AG04449 (cell line): ENCODE measurements at regions of chr1 and their contacts with region 1.

Region 1: DNA sequence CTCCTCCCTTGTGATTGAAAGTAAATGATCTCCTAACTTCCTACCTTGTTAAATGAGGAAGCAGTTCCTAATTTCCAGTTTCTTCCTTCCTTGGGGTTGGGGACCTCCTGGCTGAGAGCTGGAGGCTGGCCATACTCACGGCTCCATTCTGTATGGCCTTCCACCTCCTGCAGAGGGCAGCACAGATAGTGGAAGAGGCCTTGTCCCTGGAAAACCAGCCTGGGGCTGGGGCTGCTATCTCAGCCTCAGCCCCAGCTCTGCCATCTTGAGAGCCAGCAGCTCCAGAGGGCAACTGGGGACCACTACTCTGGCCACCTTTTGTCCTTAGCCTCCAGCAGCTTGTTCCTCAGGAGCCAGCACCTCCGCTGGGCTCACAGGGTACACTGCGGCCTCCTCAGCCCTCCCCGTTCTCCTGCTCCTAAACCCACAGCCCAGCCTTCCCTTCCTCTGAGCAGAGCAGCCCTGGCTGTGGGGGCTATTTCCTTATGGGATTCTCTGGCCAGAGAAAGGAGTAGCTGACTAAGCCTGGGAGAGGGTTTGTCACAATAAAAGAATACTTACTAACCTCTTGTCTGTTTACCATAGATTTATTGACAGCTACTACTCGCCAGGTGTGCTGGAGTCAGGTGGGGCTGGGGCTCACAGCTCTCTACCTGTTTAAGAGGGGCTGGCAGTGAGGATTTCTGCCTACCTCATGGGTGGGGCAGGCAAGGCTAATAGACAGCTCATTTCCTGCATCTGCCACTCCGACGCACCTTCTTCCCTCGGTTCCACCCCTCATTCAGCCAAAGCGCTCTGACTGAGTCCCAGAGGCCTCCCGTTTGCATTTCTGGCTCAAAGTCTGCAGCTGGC is 6.3 kb downstream of the TMEM234 start:
- DNase-seq: no peak
- H3K4me3 ChIP-seq: no peak overlapping the region
- CTCF ChIP-seq: peak; percentile 86

Region 2: GRCh38 chr1:31977385-31978131 is 238.3 kb before region 1 on chr1:
- CTCF ChIA-PET with region 1: no interaction called
- POLR2A ChIA-PET with region 1: no interaction called
- DNase-seq: peak; percentile 59
- H3K4me3 ChIP-seq: no peak overlapping the region
- CTCF ChIP-seq: peak; percentile 41

Region 3: DNA sequence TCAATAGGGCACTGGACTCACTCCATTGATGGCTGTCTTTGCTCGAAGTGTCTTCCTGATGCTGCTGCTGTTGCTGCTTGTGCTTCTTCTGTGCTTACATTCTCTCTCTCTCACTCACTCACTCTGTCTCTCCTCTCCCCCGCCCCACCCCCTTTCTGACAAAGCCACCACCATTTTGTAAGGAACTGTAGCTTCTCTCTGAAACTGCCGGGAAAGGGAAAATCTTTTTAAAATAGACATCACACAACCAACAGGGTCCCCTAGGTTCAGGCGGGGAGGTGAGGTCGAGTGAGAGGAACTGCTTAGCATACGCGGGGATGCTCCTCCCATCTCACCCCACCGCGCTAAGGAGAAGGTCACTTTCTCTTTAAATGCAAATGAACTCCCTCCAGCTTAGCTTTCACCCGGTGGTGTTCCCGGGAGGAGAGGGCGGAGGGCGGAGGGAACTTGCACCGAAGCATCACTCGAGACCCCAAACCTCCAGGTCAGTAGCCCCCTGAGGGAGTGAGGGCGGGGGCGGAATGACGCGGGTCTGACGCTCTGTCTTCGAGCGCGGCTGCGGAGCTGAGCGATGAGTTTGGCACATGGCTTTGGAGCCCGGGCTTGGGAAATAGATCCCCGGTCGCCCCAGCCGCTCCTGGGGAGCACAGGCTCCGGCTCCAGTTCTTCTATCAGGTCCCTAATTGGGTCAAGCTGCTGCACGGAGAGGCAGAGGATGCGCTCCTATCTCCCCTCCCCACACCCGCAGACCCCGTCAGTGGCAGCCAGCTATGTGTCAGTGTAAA is 15.4 kb before region 1 on chr1 and contains the start of gene CCDC28B:
- CTCF ChIA-PET with region 1: interaction called, 54 read pairs
- POLR2A ChIA-PET with region 1: interaction called, 6 read pairs
- DNase-seq: no peak
- H3K4me3 ChIP-seq: peak within 1 kb of the TSS; percentile 78
- CTCF ChIP-seq: no peak

Region 4: GRCh38 chr1:32247983-32248889 is 32.4 kb after region 1 on chr1:
- CTCF ChIA-PET with region 1: interaction called, 25 read pairs
- POLR2A ChIA-PET with region 1: no interaction called
- DNase-seq: no peak
- H3K4me3 ChIP-seq: no peak overlapping the region
- CTCF ChIP-seq: peak; percentile 92

Region 5: DNA sequence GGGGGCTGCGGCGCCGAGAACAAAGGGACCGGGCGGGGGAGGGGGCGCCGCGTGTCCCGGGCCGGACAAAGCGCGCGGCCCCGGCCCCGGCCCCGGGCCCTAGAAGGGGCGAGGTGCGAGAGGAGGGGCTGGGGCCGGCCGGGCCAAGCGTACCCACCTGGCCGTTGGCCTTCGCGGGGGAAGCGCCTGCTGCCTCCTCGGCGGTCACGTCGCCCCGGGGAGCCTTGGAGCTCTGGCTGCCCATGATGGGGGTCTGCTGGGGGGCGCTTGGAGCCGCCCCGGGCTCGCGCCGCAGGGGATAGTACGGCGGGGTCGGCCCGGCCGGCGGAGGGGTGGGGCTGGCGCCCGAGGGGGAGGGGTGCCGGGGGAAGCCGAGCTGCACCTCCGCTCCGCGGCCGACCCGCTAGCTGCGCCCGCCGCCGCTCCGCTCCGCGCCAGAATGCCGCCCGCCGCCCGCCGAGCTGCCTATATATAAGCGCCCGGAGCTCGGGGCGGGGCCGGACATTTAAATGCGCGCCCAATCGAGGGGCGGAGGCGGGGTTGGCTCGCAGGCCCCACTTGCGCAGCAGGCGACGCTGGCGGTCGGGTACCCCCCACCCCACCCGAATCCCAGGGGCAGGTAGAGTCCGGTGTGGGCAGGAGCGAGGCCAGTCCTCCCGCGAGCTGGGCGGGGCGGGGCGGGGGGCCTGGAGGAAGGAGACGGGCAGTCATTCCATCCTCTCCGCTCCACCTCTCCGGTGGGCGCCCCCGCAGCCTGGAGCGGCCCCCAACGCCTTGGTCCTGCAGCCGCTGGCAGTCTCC is 120.1 kb after region 1 on chr1 and contains the start of gene MARCKSL1:
- CTCF ChIA-PET with region 1: interaction called, 26 read pairs
- POLR2A ChIA-PET with region 1: interaction called, 22 read pairs
- DNase-seq: no peak
- H3K4me3 ChIP-seq: peak within 1 kb of the TSS; percentile 77
- CTCF ChIP-seq: no peak

Region 6: DNA sequence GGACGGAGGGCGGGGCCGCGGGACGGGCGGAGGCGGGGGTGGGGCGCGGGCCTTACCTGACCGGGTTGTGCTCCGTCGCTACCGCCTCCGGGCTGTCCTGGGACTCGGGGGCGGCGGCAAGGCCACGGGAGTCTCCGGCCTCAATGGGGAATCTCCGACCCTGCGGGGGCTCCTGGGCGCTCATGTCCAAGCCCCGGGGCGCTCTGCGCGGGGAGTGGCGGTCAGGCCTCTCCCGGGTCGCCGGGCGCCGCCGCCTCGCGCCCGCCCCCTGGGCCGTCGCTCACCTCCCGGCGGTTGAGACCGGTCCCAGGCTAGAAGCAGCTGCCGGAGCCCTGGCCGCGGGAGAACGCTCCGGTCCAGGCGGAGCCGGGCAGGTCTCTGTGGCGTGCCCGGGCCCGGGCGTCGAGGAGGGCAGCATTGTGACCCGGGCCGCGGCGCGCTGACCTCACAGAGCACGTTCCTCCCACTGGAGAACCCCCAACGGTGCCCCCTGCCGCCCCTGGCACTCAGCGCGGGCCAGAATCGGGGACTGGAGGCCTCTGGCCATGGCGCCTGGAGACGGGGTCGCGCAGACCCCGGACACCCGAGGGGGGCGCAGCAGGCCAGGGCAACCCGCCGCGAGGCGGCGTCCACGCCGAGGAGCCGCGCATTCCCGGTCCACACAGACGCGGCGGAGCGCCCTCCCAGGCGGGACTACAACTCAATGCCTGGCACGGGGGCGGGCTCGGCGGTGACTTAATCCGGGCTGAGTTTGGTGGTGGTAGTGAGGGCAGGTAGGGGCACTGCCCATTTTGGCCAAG is 146.0 kb after region 1 on chr1:
- CTCF ChIA-PET with region 1: interaction called, 37 read pairs
- POLR2A ChIA-PET with region 1: no interaction called
- DNase-seq: no peak
- H3K4me3 ChIP-seq: peak overlapping the region; percentile 42
- CTCF ChIP-seq: peak; percentile 45

Region 7: GRCh38 chr1:32400876-32401631 is 185.2 kb after region 1 on chr1:
- CTCF ChIA-PET with region 1: interaction called, 22 read pairs
- POLR2A ChIA-PET with region 1: no interaction called
- DNase-seq: peak; percentile 31
- H3K4me3 ChIP-seq: no peak overlapping the region
- CTCF ChIP-seq: peak; percentile 84